ENCODE measurements at regions of chr2 and their contacts with region 1.

Region 1: GRCh38 chr2:95022309-95023221 is 2.9 kb upstream of the MAL start:
- DNase-seq: peak; percentile 69
- ATAC-seq: peak; percentile 73

Region 2: DNA sequence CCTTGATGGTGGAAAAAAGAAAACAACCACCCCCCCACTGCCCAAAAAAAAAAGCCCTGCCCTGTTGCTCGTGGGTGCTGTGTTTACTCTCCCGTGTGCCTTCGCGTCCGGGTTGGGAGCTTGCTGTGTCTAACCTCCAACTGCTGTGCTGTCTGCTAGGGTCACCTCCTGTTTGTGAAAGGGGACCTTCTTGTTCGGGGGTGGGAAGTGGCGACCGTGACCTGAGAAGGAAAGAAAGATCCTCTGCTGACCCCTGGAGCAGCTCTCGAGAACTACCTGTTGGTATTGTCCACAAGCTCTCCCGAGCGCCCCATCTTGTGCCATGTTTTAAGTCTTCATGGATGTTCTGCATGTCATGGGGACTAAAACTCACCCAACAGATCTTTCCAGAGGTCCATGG is 31.0 kb after region 1 on chr2:
- intact Hi-C with region 1: loop called (anchors 2 kb)
- DNase-seq: no peak
- ATAC-seq: no peak

Region 3: GRCh38 chr2:95115418-95115817 is 92.9 kb after region 1 on chr2:
- intact Hi-C with region 1: loop called (anchors 2 kb)
- DNase-seq: no peak
- ATAC-seq: peak; percentile 90

Measured in Right ventricle myocardium inferior (tissue), 1 donor.